CD8-positive, alpha-beta T cell (primary cell): ENCODE measurements at regions of chr5 and their contacts with region 1.

Region 1: DNA sequence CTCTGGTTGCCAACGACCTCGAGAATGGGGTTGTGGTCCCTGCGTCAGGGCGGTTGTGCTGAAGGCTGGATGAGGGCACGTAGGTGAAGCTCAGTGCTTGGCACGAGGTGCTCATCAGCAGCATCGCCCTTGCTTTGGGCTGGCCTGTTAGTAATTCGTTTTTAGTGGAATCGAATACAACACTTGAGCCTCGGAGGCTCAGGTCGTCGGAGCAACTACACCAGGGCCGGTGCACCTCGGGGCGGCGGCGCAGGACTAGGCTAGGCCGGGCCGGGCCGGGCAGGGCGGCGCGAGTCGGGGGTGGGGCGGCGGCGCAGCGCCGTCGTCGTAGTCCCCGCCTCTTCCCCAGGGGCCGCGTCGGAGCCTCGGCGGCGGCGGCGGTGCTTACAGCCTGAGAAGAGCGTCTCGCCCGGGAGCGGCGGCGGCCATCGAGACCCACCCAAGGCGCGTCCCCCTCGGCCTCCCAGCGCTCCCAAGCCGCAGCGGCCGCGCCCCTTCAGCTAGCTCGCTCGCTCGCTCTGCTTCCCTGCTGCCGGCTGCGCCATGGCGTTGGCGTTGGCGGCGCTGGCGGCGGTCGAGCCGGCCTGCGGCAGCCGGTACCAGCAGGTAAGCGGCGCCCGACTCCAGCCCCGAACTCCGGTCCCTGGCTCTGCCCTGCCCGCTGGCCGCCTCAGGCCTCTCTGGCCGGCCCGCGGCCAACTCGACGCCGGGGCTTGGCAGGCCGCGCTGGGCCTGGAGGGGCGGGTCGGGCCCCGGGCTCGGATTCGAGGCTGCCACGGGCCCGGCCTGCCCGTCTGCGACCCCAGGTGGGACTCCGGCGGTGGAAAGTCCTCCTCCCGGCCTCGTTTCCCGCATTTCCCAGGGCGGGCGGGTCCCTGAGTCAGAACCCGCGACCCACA is at the start of gene NDFIP1:
- DNase-seq: peak; percentile 71 to 93 (median 86)
- ATAC-seq: peak; percentile 73
- H3K4me3 ChIP-seq: peak within 1 kb of the TSS; percentile 71 to 85
- H3K4me3 Mint-ChIP-seq: peak within 1 kb of the TSS; percentile 99
- H3K27ac ChIP-seq: peak within 1 kb of the TSS; percentile 93 to 95
- H3K27ac Mint-ChIP-seq: peak within 1 kb of the TSS; percentile 99
- H3K4me1 ChIP-seq: peaks cover 74% of the 10 kb centered on the region
- H3K4me1 Mint-ChIP-seq: peaks cover 70% of the 10 kb centered on the region
- H3K27me3 ChIP-seq: no peaks in the 10 kb centered on the region
- H3K27me3 Mint-ChIP-seq: no peaks in the 10 kb centered on the region
- CTCF ChIP-seq: no peak
- total RNA-seq, gene NDFIP1: 156 to 167 TPM

Region 2: GRCh38 chr5:141968914-141969608 is 139.6 kb before region 1 on chr5 and contains the start of gene RNF14:
- CTCF ChIA-PET with region 1: interaction called, 3 read pairs
- POLR2A ChIA-PET with region 1: interaction called, 14 read pairs
- intact Hi-C with region 1: loop called in 1 of 2 experiments (anchors 1 kb)
- DNase-seq: peak; percentile 86 to 97 (median 92)
- ATAC-seq: peak; percentile 94
- H3K4me3 ChIP-seq: peak within 1 kb of the TSS; percentile 77 to 94
- H3K4me3 Mint-ChIP-seq: peak within 1 kb of the TSS; percentile 98
- H3K27ac ChIP-seq: peak within 1 kb of the TSS; percentile 80 to 97
- H3K27ac Mint-ChIP-seq: peak within 1 kb of the TSS; percentile 99
- H3K4me1 ChIP-seq: peaks cover 18% of the 10 kb centered on the region
- H3K4me1 Mint-ChIP-seq: peaks cover 27% of the 10 kb centered on the region
- H3K27me3 ChIP-seq: no peaks in the 10 kb centered on the region
- H3K27me3 Mint-ChIP-seq: no peaks in the 10 kb centered on the region
- CTCF ChIP-seq: peak; percentile 98
- total RNA-seq, gene RNF14: 11.3 to 12.8 TPM

Region 3: DNA sequence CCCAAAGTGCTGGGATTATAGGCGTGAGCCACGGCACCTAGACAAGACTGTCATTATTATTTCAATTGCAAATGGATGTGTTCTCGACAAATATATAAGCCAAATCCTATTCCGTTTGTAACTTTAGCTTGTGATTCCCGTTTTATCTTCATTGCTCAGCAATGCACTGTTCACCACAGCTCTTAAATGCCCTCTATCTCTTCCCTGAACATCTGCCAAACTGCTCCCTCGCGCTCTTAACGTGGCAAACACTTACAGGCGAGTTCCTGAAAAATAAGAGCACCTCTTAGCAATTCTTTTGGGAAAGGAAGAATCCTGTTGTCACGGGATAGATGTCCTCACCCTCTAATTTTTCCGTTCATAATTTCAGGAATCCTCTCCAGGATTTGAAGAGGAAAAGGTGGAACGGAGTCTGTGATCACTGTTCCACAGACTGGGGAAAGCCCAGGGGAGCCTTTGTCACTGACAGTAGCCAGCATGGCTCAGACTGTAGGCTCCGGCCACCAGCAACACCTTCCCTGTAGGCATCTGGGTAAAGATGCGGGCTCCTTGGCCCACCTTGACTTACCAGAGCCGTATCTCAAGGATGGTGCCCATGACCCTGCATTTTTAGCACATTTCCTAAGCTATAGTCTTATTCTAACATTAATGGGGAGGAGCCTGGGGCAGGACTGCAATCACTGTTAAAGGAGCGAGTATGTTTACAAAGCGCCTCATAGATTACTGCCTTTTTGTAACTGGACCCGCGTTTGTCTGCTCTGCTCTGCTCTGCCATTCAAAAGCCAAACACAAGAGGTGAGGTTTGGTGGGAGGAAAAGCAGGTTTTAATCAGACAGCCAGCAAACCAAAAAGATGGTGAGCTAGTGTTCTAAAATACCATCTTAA is 75.7 kb before region 1 on chr5:
- CTCF ChIA-PET with region 1: interaction called, 5 read pairs
- POLR2A ChIA-PET with region 1: interaction called, 13 read pairs
- intact Hi-C with region 1: no loop called
- DNase-seq: no peak
- ATAC-seq: no peak
- H3K4me3 ChIP-seq: no peak overlapping the region
- H3K4me3 Mint-ChIP-seq: no peak overlapping the region
- H3K27ac ChIP-seq: no peak overlapping the region
- H3K27ac Mint-ChIP-seq: no peak overlapping the region
- H3K4me1 ChIP-seq: peaks cover 18% of the 10 kb centered on the region
- H3K4me1 Mint-ChIP-seq: peaks cover 24% of the 10 kb centered on the region
- H3K27me3 ChIP-seq: no peaks in the 10 kb centered on the region
- H3K27me3 Mint-ChIP-seq: no peaks in the 10 kb centered on the region
- CTCF ChIP-seq: no peak

Region 4: GRCh38 chr5:142095651-142096330 is 12.9 kb before region 1 on chr5:
- CTCF ChIA-PET with region 1: interaction called, 26 read pairs
- POLR2A ChIA-PET with region 1: interaction called, 47 read pairs
- intact Hi-C with region 1: loop called (anchors 1 kb)
- DNase-seq: peak; percentile 68 to 95 (median 80)
- ATAC-seq: peak; percentile 87
- H3K4me3 ChIP-seq: no peak overlapping the region
- H3K4me3 Mint-ChIP-seq: peak overlapping the region; percentile 56
- H3K27ac ChIP-seq: peak overlapping the region; percentile 62 to 78
- H3K27ac Mint-ChIP-seq: peak overlapping the region; percentile 95
- H3K4me1 ChIP-seq: peaks cover 61% of the 10 kb centered on the region
- H3K4me1 Mint-ChIP-seq: peaks cover 57% of the 10 kb centered on the region
- H3K27me3 ChIP-seq: no peaks in the 10 kb centered on the region
- H3K27me3 Mint-ChIP-seq: no peaks in the 10 kb centered on the region
- CTCF ChIP-seq: no peak

Region 5: DNA sequence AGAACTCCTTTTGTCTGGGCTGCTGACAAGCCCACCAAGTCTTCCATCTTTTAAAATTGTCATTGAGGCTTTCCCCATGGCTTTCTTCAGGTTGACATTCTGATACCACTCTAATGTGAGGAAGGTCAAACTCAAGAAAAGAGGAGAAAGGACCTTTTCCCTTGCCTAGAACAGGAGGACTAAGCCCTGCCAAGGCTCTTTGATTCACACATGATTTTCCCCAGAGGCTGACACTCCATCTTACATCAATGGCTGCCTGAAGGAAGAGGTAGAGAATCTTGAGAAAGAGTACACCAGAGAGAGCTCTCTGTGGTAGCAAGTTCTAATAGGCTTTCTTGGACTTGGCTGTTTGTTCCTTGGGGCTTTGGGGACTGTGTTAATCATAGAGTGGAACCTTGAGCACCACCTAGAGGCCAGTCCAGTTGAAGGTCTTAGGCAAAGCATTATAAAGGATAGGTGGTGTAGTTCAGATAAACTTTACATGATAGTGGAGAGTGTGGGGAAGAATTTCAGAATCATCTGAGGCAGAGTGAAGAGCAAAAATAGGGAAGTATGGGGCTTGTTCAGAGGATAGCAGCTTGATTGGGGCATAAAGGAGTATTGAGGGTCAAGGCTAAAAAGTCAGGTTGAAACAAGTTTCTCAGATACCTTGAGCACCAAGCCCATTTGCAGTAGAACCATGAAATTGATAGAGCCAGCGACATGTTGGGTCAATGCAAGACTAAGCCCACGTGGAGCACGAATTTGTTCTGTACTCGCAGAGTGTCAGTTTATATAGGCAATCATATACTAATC is 36.6 kb after region 1 on chr5:
- CTCF ChIA-PET with region 1: interaction called, 11 read pairs
- POLR2A ChIA-PET with region 1: no interaction called
- intact Hi-C with region 1: loop called in 1 of 2 experiments (anchors 1 kb)
- DNase-seq: peak; percentile 18 to 76 (median 61)
- ATAC-seq: peak; percentile 78
- H3K4me3 ChIP-seq: no peak overlapping the region
- H3K4me3 Mint-ChIP-seq: no peak overlapping the region
- H3K27ac ChIP-seq: no peak overlapping the region
- H3K27ac Mint-ChIP-seq: no peak overlapping the region
- H3K4me1 ChIP-seq: no peaks in the 10 kb centered on the region
- H3K4me1 Mint-ChIP-seq: peaks cover 13% of the 10 kb centered on the region
- H3K27me3 ChIP-seq: no peaks in the 10 kb centered on the region
- H3K27me3 Mint-ChIP-seq: no peaks in the 10 kb centered on the region
- CTCF ChIP-seq: peak; percentile 63

Region 6: GRCh38 chr5:143002459-143003328 is 894.0 kb after region 1 on chr5:
- CTCF ChIA-PET with region 1: no interaction called
- POLR2A ChIA-PET with region 1: no interaction called
- intact Hi-C with region 1: loop called in 1 of 2 experiments (anchors 10 kb)
- DNase-seq: peak; percentile 16 to 94 (median 58)
- ATAC-seq: peak; percentile 85
- H3K4me3 ChIP-seq: peak overlapping the region in 1 of 2 experiments; percentile 1
- H3K4me3 Mint-ChIP-seq: peak overlapping the region; percentile 56
- H3K27ac ChIP-seq: peak overlapping the region; percentile 83 to 89
- H3K27ac Mint-ChIP-seq: peak overlapping the region; percentile 87
- H3K4me1 ChIP-seq: peaks cover 43% of the 10 kb centered on the region
- H3K4me1 Mint-ChIP-seq: peaks cover 70% of the 10 kb centered on the region
- H3K27me3 ChIP-seq: no peaks in the 10 kb centered on the region
- H3K27me3 Mint-ChIP-seq: no peaks in the 10 kb centered on the region
- CTCF ChIP-seq: peak; percentile 70